ENCODE measurements at regions of chr16 and their contacts with region 1.

Region 1: DNA sequence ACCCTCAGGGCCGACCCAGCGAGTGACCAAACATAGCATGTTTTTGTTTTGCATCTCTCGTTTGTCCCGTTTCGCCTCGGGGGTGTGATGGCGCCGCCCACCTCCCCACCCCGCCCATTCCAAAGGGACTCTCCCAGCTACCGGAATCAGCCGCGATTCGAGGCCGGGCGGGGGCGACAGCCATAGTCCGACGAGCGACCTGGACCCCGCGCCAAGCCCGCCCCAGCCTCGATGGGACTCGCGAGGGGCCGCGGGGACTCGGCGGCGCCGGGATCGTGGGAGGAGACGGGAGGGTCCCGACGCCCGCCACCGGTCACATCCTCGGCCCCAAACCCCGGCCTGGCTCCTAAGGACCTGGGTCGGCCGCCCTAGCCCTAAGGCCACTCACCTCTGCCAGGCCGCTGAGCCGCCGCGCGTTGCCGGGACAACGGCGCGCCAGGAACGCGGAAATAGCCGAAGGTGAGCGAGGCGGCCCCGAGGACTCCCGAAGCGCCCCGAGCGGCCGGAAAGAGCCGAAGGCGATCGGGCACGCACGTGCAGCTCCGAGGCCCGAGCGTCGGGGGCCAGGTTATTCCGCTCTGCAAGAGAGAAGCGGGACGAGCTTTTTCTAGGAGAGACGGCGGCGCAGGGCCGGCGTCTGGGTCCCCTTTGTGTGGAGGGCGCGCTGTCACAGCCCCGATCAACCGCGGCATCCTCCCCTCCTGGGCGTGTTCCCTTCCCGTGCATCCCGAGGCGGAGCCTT is 1.4 kb downstream of the IFT140 start:
- DNase-seq: peak; percentile 95
- H3K4me3 ChIP-seq: peak overlapping the region; percentile 62 to 99 (median 96)
- H3K27ac ChIP-seq: peak overlapping the region; percentile 66 to 90 (median 86)
- H3K4me1 ChIP-seq: peaks cover 28 to 60% (median 47%) of the 10 kb centered on the region in 6 donors
- H3K27me3 ChIP-seq: peaks cover 0 to 25% (median 0%) of the 10 kb centered on the region in 7 donors
- CTCF ChIP-seq: no peak
- POLR2A ChIP-seq: no peak

Region 2: GRCh38 chr16:1428511-1428910 is 181.9 kb before region 1 on chr16:
- intact Hi-C with region 1: loop called (anchors 10 kb)
- DNase-seq: peak; percentile 91
- H3K4me3 ChIP-seq: peak overlapping the region in 2 of 8 donors; percentile 3 to 29
- H3K27ac ChIP-seq: no peak overlapping the region
- H3K4me1 ChIP-seq: peaks cover 0 to 53% (median 12%) of the 10 kb centered on the region in 6 donors
- H3K27me3 ChIP-seq: peaks cover 0 to 53% (median 0%) of the 10 kb centered on the region in 7 donors
- CTCF ChIP-seq: peak; percentile 15 to 77 (median 53)
- POLR2A ChIP-seq: no peak

Region 3: DNA sequence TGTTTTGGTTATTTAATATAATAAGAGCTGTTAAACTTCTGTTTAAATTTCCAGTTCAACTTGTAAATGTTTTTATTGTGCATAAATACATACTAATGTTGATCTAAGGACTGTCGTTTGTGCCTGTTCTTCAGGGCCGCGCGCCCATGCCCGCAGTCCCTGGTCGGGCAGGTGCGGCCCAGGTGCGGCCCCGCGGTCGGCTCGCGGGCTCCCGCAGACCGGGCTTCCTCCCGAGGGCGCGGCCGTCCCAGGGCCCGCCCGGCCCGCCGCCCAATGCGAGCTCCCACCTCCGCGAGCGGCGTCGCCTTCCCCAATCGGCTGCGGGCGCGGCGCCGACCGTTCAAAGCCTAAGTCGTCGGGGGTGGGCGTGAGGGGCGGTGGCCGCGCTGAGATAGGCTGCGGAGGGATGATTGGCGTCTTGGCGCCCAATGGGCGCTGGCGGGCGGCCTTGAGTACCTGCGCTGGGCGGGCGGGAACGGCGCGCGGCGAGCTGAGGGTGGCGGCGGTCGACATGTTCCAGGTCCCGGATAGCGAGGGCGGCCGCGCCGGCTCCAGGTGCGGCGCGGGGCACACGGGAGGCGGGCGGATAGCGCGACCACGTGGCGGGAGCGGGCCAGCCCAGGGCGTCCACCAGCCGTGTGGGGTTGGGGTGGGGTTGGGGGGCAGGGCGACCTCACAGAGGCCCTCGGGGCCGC is 67.5 kb after region 1 on chr16 and contains the start of gene JPT2:
- intact Hi-C with region 1: no loop called
- DNase-seq: peak; percentile 97
- H3K4me3 ChIP-seq: peak within 1 kb of the TSS; percentile 75 to 94 (median 88)
- H3K27ac ChIP-seq: peak within 1 kb of the TSS in 7 of 8 donors; percentile 43 to 87 (median 82)
- H3K4me1 ChIP-seq: peaks cover 16 to 44% (median 22%) of the 10 kb centered on the region in 6 donors
- H3K27me3 ChIP-seq: no peaks in the 10 kb centered on the region
- CTCF ChIP-seq: peak in 5 of 11 experiments; percentile 6 to 34 (median 25)
- POLR2A ChIP-seq: no peak
- total RNA-seq, gene JPT2: 15.6 to 30.5 (median 22.7) TPM

Measured in spleen (tissue), 13 donors.